Caco-2 (cell line): ENCODE measurements at regions of chr4 and their contacts with region 1.

Region 1: GRCh38 chr4:40719008-40719623 is 30.6 kb upstream of the NSUN7 start:
- DNase-seq: peak; percentile 41 to 54
- H3K4me3 ChIP-seq: no peak overlapping the region
- H3K4me3 Mint-ChIP-seq: no peak overlapping the region
- H3K27ac Mint-ChIP-seq: no peak overlapping the region
- H3K4me1 ChIP-seq: peaks cover 23% of the 10 kb centered on the region
- H3K4me1 Mint-ChIP-seq: no peaks in the 10 kb centered on the region
- H3K27me3 ChIP-seq: no peaks in the 10 kb centered on the region
- H3K27me3 Mint-ChIP-seq: no peaks in the 10 kb centered on the region
- CTCF ChIP-seq: peak; percentile 54 to 69

Region 2: GRCh38 chr4:40149960-40150385 is 569.1 kb before region 1 on chr4:
- CTCF ChIA-PET with region 1: no interaction called
- POLR2A ChIA-PET with region 1: no interaction called
- intact Hi-C with region 1: loop called (anchors 5 kb)
- DNase-seq: peak; percentile 54 to 69
- H3K4me3 ChIP-seq: no peak overlapping the region
- H3K4me3 Mint-ChIP-seq: no peak overlapping the region
- H3K27ac Mint-ChIP-seq: no peak overlapping the region
- H3K4me1 ChIP-seq: peaks cover 15% of the 10 kb centered on the region; the same call in 1 of the 2 replicates
- H3K4me1 Mint-ChIP-seq: no peaks in the 10 kb centered on the region
- H3K27me3 ChIP-seq: no peaks in the 10 kb centered on the region
- H3K27me3 Mint-ChIP-seq: no peaks in the 10 kb centered on the region
- CTCF ChIP-seq: peak; percentile 74 to 79

Region 3: GRCh38 chr4:40409835-40410234 is 309.3 kb before region 1 on chr4:
- CTCF ChIA-PET with region 1: no interaction called
- POLR2A ChIA-PET with region 1: no interaction called
- intact Hi-C with region 1: loop called (anchors 10 kb)
- DNase-seq: no peak
- H3K4me3 ChIP-seq: no peak overlapping the region
- H3K4me3 Mint-ChIP-seq: no peak overlapping the region
- H3K27ac Mint-ChIP-seq: no peak overlapping the region
- H3K4me1 ChIP-seq: peaks cover 12% of the 10 kb centered on the region
- H3K4me1 Mint-ChIP-seq: peaks cover 7% of the 10 kb centered on the region
- H3K27me3 ChIP-seq: no peaks in the 10 kb centered on the region
- H3K27me3 Mint-ChIP-seq: no peaks in the 10 kb centered on the region
- CTCF ChIP-seq: no peak

Region 4: DNA sequence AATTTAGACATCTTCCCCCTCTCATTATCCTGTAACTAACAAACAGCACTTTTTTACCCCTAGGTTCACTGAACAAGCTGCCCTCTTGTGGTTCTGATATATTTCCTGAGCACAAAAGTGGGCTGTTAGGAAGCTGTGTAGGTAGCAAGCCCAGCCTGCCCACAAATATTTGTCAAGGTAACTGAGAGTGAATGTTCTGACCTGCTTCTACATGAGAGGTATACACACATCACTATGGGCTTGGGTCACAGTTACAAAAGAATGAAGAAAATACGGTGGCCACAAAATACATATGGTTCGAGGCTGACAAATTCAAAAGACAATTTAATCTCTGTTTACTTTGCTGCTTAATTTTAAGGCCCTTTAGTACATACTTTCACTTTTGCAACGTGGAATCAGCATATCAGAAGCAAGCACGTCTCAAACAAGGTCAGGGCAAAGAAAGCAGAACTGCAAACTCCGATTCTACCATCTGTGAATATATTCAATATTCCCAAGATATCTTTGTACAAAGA is 168.1 kb before region 1 on chr4:
- CTCF ChIA-PET with region 1: no interaction called
- POLR2A ChIA-PET with region 1: no interaction called
- intact Hi-C with region 1: loop called (anchors 1 kb)
- DNase-seq: peak in 1 of 2 experiments; percentile 55
- H3K4me3 ChIP-seq: no peak overlapping the region
- H3K4me3 Mint-ChIP-seq: peak overlapping the region; percentile 43
- H3K27ac Mint-ChIP-seq: no peak overlapping the region
- H3K4me1 ChIP-seq: peaks cover 39% of the 10 kb centered on the region
- H3K4me1 Mint-ChIP-seq: peaks cover 20% of the 10 kb centered on the region
- H3K27me3 ChIP-seq: no peaks in the 10 kb centered on the region
- H3K27me3 Mint-ChIP-seq: no peaks in the 10 kb centered on the region
- CTCF ChIP-seq: peak; percentile 20 to 66

Region 5: DNA sequence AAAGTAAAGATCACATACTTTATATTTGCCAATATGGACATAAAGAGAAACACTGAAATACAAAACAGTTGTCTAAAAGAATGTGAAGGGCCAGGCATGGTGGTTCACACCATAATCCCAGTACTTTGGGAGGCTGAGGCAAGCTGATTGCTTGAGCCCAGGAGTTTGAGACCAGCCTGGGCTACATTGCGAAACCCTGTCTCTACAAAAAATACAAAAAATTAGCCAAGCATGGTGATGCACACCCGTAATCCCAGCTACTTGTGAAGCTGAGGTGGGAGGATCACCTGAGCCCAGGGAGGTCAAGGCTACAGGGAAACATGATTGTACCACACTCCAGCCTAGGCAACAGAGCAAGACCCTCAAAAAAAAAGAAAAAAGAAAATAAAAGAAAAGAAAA is 101.2 kb before region 1 on chr4:
- CTCF ChIA-PET with region 1: no interaction called
- POLR2A ChIA-PET with region 1: no interaction called
- intact Hi-C with region 1: no loop called
- DNase-seq: no peak
- H3K4me3 ChIP-seq: no peak overlapping the region
- H3K4me3 Mint-ChIP-seq: no peak overlapping the region
- H3K27ac Mint-ChIP-seq: no peak overlapping the region
- H3K4me1 ChIP-seq: peaks cover 18% of the 10 kb centered on the region; the same call in 1 of the 2 replicates
- H3K4me1 Mint-ChIP-seq: peaks cover 18% of the 10 kb centered on the region
- H3K27me3 ChIP-seq: no peaks in the 10 kb centered on the region; the same call in 1 of the 2 replicates
- H3K27me3 Mint-ChIP-seq: no peaks in the 10 kb centered on the region
- CTCF ChIP-seq: no peak

Region 6: GRCh38 chr4:40629401-40630334 is 89.4 kb before region 1 on chr4 and contains the start of gene RBM47:
- CTCF ChIA-PET with region 1: interaction called, 4 read pairs
- POLR2A ChIA-PET with region 1: no interaction called
- intact Hi-C with region 1: loop called (anchors 1 kb)
- DNase-seq: peak; percentile 81 to 88
- H3K4me3 ChIP-seq: peak within 1 kb of the TSS; percentile 51
- H3K4me3 Mint-ChIP-seq: peak within 1 kb of the TSS; percentile 86
- H3K27ac Mint-ChIP-seq: peak within 1 kb of the TSS; percentile 94
- H3K4me1 ChIP-seq: peaks cover 12% of the 10 kb centered on the region
- H3K4me1 Mint-ChIP-seq: peaks cover 25% of the 10 kb centered on the region
- H3K27me3 ChIP-seq: no peaks in the 10 kb centered on the region
- H3K27me3 Mint-ChIP-seq: no peaks in the 10 kb centered on the region
- CTCF ChIP-seq: no peak
- total RNA-seq, gene RBM47: 59.1 and 62.1 TPM in 2 replicates